PC-3 (cell line): ENCODE measurements at regions of chr7 and their contacts with region 1.

Region 1: DNA sequence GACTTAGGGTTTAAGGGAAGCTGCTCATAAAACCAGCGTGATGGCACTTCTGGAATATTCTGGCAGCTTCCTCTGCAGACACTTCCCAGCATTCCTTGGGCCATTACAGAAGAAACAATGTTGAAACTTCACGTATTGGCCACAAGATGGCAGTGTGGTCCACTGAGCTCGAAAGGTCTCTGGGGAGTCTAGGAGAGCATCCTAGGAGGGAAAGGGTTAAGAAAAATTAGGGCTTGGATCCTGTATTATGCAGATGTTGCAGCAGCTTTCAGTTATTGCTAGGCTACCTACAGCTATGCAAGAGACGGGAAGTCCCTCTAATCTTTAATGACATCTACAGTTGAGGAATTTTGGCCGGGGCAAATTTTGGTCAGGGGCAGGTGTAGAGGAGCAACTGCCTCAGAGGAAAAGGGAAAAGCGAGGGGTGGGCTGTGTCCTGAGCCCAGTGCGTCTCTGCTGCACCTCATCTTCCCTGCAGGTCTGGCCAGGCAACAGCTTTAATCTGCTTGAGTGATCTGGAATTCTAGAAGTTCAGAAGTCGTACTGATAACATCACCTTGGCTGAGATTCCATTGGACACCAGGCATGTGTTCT is 220.7 kb upstream of the PRSS58 start:
- DNase-seq: peak; percentile 74
- ATAC-seq: peak; percentile 65
- H3K4me3 ChIP-seq: no peak overlapping the region
- H3K27ac ChIP-seq: no peak overlapping the region
- H3K4me1 ChIP-seq: peaks cover 12% of the 10 kb centered on the region
- H3K27me3 ChIP-seq: no peaks in the 10 kb centered on the region
- CTCF ChIP-seq: peak; percentile 84

Region 2: GRCh38 chr7:142357953-142358520 is 120.5 kb before region 1 on chr7:
- CTCF ChIA-PET with region 1: no interaction called
- POLR2A ChIA-PET with region 1: no interaction called
- intact Hi-C with region 1: loop called (anchors 2 kb)
- DNase-seq: peak; percentile 78
- ATAC-seq: peak; percentile 81
- H3K4me3 ChIP-seq: no peak overlapping the region
- H3K27ac ChIP-seq: no peak overlapping the region
- H3K4me1 ChIP-seq: peaks cover 22% of the 10 kb centered on the region
- H3K27me3 ChIP-seq: no peaks in the 10 kb centered on the region
- CTCF ChIP-seq: peak; percentile 85

Region 3: DNA sequence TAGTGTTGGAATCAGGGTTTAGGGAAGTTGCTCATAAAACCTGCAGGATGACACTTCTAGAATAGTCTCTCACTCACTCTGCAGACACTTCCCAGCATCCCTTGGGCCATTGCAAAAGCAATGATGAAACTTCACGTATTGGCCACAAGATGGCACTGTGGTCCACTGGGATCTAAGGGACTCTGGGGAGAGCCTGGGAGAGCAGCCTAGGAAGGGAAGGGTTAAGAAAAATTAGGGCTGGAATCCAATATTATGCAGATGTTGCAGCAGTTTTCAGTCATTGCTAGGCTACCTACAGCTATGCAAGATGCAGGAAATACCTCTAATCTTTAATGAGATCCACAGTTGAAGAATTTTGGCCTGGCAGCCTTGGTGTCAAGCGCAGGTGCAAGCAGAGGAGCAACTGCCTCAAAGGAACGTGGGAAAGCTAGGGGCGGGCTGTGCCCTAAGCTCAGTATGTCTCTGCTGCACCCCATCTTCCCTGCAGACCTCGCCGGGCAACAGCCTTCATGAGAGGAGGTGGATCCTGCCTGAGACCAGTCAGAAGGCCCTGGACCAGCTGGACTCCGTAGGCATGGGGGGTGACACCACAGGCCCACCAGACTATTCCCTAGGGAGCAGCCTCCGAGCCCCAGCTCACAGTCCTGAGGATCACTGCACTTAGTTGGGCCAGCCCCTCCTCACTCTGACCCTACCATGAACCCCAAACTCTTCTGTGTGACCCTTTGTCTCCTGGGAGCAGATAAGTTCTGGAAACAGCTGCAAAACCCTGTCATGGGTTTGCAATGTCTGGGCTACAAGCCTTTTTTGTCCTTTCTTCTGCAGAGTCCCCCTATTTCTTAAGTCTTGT is 92.9 kb before region 1 on chr7:
- CTCF ChIA-PET with region 1: interaction called, 3 read pairs
- POLR2A ChIA-PET with region 1: no interaction called
- intact Hi-C with region 1: loop called (anchors 1 kb)
- DNase-seq: peak; percentile 84
- ATAC-seq: peak; percentile 60
- H3K4me3 ChIP-seq: peak overlapping the region; percentile 17; the same call in 1 of the 2 replicates
- H3K27ac ChIP-seq: peak overlapping the region; percentile 93
- H3K4me1 ChIP-seq: peaks cover 25% of the 10 kb centered on the region
- H3K27me3 ChIP-seq: no peaks in the 10 kb centered on the region
- CTCF ChIP-seq: peak; percentile 87

Region 4: DNA sequence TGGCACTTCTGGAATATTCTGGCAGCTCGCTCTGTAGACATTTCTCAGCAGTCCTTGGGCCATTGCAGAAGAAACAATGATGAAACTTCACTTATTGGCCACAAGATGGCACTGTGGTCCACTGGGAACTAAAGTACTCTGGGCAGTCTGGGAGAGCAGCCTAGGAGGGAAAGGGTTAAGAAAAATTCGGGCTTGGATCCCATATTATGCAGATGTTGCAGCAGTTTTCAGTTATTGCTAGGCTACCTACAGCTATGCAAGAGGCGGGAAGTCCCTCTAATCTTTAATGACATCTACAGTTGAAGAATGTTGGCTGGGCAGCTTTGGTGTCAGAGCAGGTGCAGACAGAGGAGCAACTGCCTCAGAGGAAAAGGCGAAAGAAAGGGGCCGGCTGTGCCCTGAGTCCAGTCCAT is 19.0 kb before region 1 on chr7:
- CTCF ChIA-PET with region 1: interaction called, 7 read pairs
- POLR2A ChIA-PET with region 1: no interaction called
- intact Hi-C with region 1: loop called (anchors 1 kb)
- DNase-seq: peak; percentile 73
- ATAC-seq: peak; percentile 82
- H3K4me3 ChIP-seq: no peak overlapping the region
- H3K27ac ChIP-seq: no peak overlapping the region
- H3K4me1 ChIP-seq: peaks cover 25% of the 10 kb centered on the region
- H3K27me3 ChIP-seq: no peaks in the 10 kb centered on the region
- CTCF ChIP-seq: peak; percentile 83

Region 5: DNA sequence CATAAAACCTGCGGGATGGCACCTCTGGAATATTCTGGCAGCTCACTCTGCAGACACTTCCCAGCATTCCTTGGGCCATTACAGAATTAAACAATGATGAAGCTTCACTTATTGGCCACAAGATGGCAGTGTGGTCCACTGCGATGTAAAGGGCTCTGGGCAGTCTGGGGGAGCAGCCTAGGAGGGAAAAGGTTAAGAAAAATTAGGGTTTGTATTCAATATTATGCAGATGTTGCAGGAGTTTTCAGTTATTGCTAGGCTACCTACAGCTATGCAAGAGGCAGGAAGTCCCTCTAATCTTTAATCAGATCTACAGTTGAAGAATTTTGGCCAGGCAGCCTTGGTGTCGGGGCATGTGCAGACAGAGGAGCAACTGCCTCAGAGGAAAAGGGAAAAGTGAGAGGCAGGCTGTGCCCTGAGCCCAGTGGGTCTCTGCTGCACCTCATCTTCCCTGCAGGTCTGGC is 37.5 kb after region 1 on chr7:
- CTCF ChIA-PET with region 1: interaction called, 4 read pairs
- POLR2A ChIA-PET with region 1: no interaction called
- intact Hi-C with region 1: loop called (anchors 1 kb)
- DNase-seq: peak; percentile 78
- ATAC-seq: peak; percentile 81
- H3K4me3 ChIP-seq: no peak overlapping the region
- H3K27ac ChIP-seq: no peak overlapping the region
- H3K4me1 ChIP-seq: peaks cover 21% of the 10 kb centered on the region
- H3K27me3 ChIP-seq: no peaks in the 10 kb centered on the region
- CTCF ChIP-seq: peak; percentile 88

Region 6: DNA sequence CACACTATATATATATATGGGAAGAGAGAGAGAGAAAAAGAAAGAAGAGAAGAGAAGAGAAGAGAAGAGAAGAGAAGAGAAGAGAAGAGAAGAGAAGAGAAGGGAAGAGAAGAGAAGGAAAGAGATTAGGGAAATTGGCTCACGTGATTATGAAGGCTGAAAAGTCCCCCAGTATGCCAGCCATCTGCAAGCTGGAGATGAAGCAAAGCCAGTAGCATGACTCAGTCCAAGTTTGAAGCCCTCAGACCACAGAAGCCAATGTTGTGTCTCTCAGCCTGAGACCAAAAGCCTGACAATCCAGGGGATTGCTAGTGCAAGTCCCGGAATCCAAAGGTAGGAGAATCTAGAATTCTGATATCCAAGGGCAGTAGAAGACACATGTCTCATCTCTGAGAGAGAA is 64.4 kb after region 1 on chr7:
- CTCF ChIA-PET with region 1: no interaction called
- POLR2A ChIA-PET with region 1: no interaction called
- intact Hi-C with region 1: no loop called
- DNase-seq: no peak
- ATAC-seq: no peak
- H3K4me3 ChIP-seq: no peak overlapping the region
- H3K27ac ChIP-seq: no peak overlapping the region
- H3K4me1 ChIP-seq: peaks cover 22% of the 10 kb centered on the region
- H3K27me3 ChIP-seq: no peaks in the 10 kb centered on the region
- CTCF ChIP-seq: no peak

Region 7: GRCh38 chr7:142612237-142612881 is 133.8 kb after region 1 on chr7:
- CTCF ChIA-PET with region 1: no interaction called
- POLR2A ChIA-PET with region 1: no interaction called
- intact Hi-C with region 1: no loop called
- DNase-seq: peak; percentile 49
- ATAC-seq: peak; percentile 62
- H3K4me3 ChIP-seq: no peak overlapping the region
- H3K27ac ChIP-seq: no peak overlapping the region
- H3K4me1 ChIP-seq: peaks cover 18% of the 10 kb centered on the region
- H3K27me3 ChIP-seq: no peaks in the 10 kb centered on the region
- CTCF ChIP-seq: no peak